ENCODE measurements at regions of chr1 and their contacts with region 1.

Region 1: GRCh38 chr1:17485280-17485679 is 45.8 kb upstream of the RCC2 start:
- DNase-seq: peak; percentile 50
- ATAC-seq: peak; percentile 29; the same call in 1 of the 2 replicates
- H3K4me3 ChIP-seq: no peak overlapping the region
- H3K27ac ChIP-seq: no peak overlapping the region
- H3K4me1 ChIP-seq: no peaks in the 10 kb centered on the region
- H3K27me3 ChIP-seq: no peaks in the 10 kb centered on the region
- CTCF ChIP-seq: peak; percentile 65

Region 2: GRCh38 chr1:17419626-17420328 is 65.5 kb before region 1 on chr1:
- CTCF ChIA-PET with region 1: no interaction called
- POLR2A ChIA-PET with region 1: no interaction called
- intact Hi-C with region 1: loop called (anchors 2 kb)
- DNase-seq: peak; percentile 56
- ATAC-seq: peak; percentile 71
- H3K4me3 ChIP-seq: no peak overlapping the region
- H3K27ac ChIP-seq: no peak overlapping the region
- H3K4me1 ChIP-seq: no peaks in the 10 kb centered on the region
- H3K27me3 ChIP-seq: no peaks in the 10 kb centered on the region
- CTCF ChIP-seq: peak; percentile 98

Region 3: GRCh38 chr1:17598248-17598647 is 113.0 kb after region 1 on chr1:
- CTCF ChIA-PET with region 1: interaction called, 12 read pairs
- POLR2A ChIA-PET with region 1: no interaction called
- intact Hi-C with region 1: no loop called
- DNase-seq: no peak
- ATAC-seq: no peak
- H3K4me3 ChIP-seq: no peak overlapping the region
- H3K27ac ChIP-seq: no peak overlapping the region
- H3K4me1 ChIP-seq: no peaks in the 10 kb centered on the region
- H3K27me3 ChIP-seq: no peaks in the 10 kb centered on the region
- CTCF ChIP-seq: no peak

Region 4: DNA sequence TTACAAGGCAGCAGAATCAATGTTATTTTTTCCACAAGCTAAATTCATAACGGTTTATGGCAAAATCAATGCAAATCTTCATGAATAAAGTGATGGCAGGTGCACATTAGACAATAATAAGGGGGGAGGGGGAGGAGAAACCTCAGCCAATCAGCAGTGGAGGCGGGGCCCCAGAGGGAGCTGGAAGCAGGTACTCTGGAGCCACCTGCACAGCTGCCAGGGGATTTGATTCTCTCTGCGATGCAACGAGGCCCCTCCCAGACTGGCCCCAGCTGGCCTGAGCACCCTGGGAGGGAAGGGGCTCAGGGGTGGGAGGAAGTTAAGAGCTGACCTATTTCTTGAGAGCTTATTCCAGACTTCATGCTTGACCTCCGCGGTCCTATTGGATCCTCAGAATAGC is 494.5 kb after region 1 on chr1:
- CTCF ChIA-PET with region 1: no interaction called
- POLR2A ChIA-PET with region 1: no interaction called
- intact Hi-C with region 1: no loop called
- DNase-seq: no peak
- ATAC-seq: no peak
- H3K4me3 ChIP-seq: no peak overlapping the region
- H3K27ac ChIP-seq: no peak overlapping the region
- H3K4me1 ChIP-seq: no peaks in the 10 kb centered on the region
- H3K27me3 ChIP-seq: peaks cover 21% of the 10 kb centered on the region; the same call in 1 of the 2 replicates
- CTCF ChIP-seq: no peak